Sigmoid colon (tissue), 7 donors: ENCODE measurements at regions of chr11 and their contacts with region 1.

Region 1: GRCh38 chr11:46616998-46617675 is at the starts of genes ATG13 and HARBI1:
- DNase-seq: peak; percentile 91
- H3K4me3 ChIP-seq: peak within 1 kb of the TSS; percentile 71 to 97 (median 83)
- H3K27ac ChIP-seq: peak within 1 kb of the TSS; percentile 92 to 97 (median 92)
- H3K4me1 ChIP-seq: peaks cover 0 to 36% (median 29%) of the 10 kb centered on the region in 4 donors
- H3K27me3 ChIP-seq: no peaks in the 10 kb centered on the region
- CTCF ChIP-seq: no peak
- EP300 ChIP-seq: peak in 1 of 4 donors; percentile 21
- POLR2A ChIP-seq: peak in 1 of 2 donors; percentile 13
- total RNA-seq, gene ATG13: 47.7 to 96.4 (median 52.7) TPM
- total RNA-seq, gene HARBI1: 1.6 to 8.9 (median 3.8) TPM

Region 2: GRCh38 chr11:46389450-46390253 is 227.5 kb before region 1 on chr11:
- intact Hi-C with region 1: loop called (anchors 2 kb)
- DNase-seq: peak; percentile 74
- H3K4me3 ChIP-seq: peak overlapping the region in 3 of 4 donors; percentile 26 to 49 (median 46)
- H3K27ac ChIP-seq: no peak overlapping the region
- H3K4me1 ChIP-seq: peaks cover 0 to 42% (median 40%) of the 10 kb centered on the region in 4 donors
- H3K27me3 ChIP-seq: peaks cover 35 to 82% (median 57%) of the 10 kb centered on the region in 3 donors
- CTCF ChIP-seq: peak; percentile 17 to 78 (median 60)
- EP300 ChIP-seq: no peak
- POLR2A ChIP-seq: no peak

Region 3: GRCh38 chr11:46554205-46555055 is 62.7 kb before region 1 on chr11:
- intact Hi-C with region 1: loop called (anchors 5 kb)
- DNase-seq: no peak
- H3K4me3 ChIP-seq: no peak overlapping the region
- H3K27ac ChIP-seq: peak overlapping the region; percentile 60 to 79 (median 72)
- H3K4me1 ChIP-seq: peaks cover 0 to 36% (median 35%) of the 10 kb centered on the region in 4 donors
- H3K27me3 ChIP-seq: no peaks in the 10 kb centered on the region
- CTCF ChIP-seq: no peak
- EP300 ChIP-seq: peak; percentile 10 to 65 (median 48)
- POLR2A ChIP-seq: no peak

Region 4: GRCh38 chr11:47171856-47172255 is 554.7 kb after region 1 on chr11:
- intact Hi-C with region 1: no loop called
- DNase-seq: peak; percentile 78
- H3K4me3 ChIP-seq: no peak overlapping the region
- H3K27ac ChIP-seq: peak overlapping the region; percentile 54 to 71 (median 68)
- H3K4me1 ChIP-seq: peaks cover 0 to 51% (median 40%) of the 10 kb centered on the region in 4 donors
- H3K27me3 ChIP-seq: no peaks in the 10 kb centered on the region
- CTCF ChIP-seq: no peak
- EP300 ChIP-seq: no peak
- POLR2A ChIP-seq: no peak